ENCODE measurements at regions of chr19 and their contacts with region 1.

Region 1: DNA sequence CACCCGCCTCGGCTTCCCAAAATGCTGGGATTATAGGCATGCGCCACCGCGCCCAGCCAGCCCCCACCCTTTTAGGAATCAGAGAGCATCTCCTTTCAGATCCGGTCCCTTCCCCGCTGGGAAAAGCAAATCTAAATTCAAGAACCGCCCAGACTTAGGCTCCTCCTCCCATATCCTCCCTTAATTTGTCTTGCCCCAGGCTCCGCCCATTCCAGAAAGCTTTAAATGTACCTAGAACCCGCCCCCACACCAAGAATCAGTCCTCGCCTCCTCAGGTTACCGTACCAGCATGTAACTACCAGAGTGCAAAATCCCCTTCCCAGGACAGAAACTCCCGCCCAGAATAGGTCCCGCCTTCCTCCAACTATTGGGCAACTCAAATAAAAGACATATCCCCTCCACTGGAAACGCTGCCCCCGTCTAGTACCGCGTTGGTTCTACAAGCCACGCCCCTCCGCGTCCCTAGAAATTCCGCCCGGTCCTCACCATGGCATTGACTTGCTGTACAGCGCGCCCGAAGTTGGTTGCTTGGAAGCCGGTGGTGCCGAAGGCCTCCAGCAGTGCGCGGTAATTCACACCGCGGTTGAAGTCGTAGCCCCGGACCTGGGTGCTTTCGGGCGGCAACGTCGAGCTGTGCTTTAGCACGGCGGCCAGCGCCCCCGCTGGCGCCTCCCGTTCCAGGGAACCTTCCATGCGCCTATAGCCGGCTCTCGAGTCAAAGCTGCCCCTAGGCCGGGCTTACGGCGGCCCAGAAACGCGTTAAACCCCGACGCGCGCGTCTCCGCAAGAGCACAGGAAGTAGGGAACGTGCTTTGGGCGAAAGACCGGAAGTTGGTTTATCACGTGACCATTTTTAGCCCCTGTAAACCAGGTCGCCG is at the start of gene DHPS:
- DNase-seq: peak; percentile 89
- H3K4me3 ChIP-seq: peak within 1 kb of the TSS; percentile 98
- CTCF ChIP-seq: no peak

Region 2: GRCh38 chr19:12513531-12514061 is 167.7 kb before region 1 on chr19:
- CTCF ChIA-PET with region 1: no interaction called
- POLR2A ChIA-PET with region 1: no interaction called
- DNase-seq: no peak
- H3K4me3 ChIP-seq: no peak overlapping the region
- CTCF ChIP-seq: no peak

Region 3: DNA sequence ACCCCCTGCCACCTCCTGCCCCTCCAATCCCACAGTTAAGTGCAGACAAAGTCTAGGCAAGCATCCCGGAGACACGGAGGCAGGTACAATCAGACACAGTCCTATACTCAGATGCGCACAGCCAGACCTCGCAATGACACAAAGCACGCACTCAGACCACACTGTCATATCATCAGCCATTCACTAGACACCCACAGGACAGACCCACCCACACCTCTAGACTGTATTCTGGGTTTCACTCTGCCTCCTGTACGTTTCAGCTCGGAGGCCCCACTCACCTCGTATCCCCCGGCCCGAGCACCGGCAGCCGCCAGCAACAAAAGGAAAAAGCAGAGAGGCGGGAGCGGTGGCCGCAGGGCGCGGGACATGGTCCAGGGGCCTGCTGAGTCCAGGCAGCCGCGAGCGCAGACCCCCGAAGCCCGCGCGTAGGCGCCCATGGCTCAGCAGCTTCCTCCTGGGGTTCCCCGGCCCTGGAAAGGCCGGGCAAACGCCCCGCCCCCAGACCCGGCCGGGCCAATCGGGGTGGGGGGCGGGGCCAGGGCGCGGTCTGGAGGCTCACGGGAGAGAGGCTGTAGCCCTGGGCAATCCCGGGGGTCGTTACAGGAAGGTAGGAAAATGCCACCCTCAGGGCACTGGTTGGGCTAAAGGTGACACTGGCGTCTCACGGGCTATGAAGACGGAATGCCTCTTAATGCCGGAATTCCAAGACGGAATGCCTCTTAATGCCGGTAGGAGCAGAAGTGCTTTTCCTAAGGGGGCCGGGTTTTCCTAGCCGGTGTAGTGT is 14.9 kb before region 1 on chr19 and contains the starts of genes MAN2B1 and WDR83:
- CTCF ChIA-PET with region 1: interaction called, 26 read pairs
- POLR2A ChIA-PET with region 1: interaction called, 4 read pairs
- DNase-seq: no peak
- H3K4me3 ChIP-seq: peak within 1 kb of the TSS; percentile 77
- CTCF ChIP-seq: no peak

Measured in AG04449 (cell line).